ENCODE measurements at regions of chr20 and their contacts with region 1.

Region 1: GRCh38 chr20:38337561-38338140 is 8.6 kb upstream of the LBP start:
- DNase-seq: peak; percentile 79 to 98
- H3K4me3 ChIP-seq: no peak overlapping the region
- H3K27ac ChIP-seq: no peak overlapping the region
- H3K4me1 ChIP-seq: peaks cover 6 to 11% (median 10%) of the 10 kb centered on the region in 4 experiments
- H3K27me3 ChIP-seq: no peaks in the 10 kb centered on the region
- CTCF ChIP-seq: peak; percentile 99 to 100 (median 100)
- EP300 ChIP-seq: peak in 1 of 2 experiments; percentile 36; a peak in 1 of 3 replicates
- POLR2A ChIP-seq: no peak
- RAD21 ChIP-seq: peak; percentile 99 to 100

Region 2: GRCh38 chr20:38260378-38261053 is 77.1 kb before region 1 on chr20 and contains the start of gene KIAA1755:
- CTCF ChIA-PET with region 1: no interaction called
- POLR2A ChIA-PET with region 1: no interaction called
- DNase-seq: peak in 1 of 2 experiments; percentile 73
- H3K4me3 ChIP-seq: peak within 1 kb of the TSS; percentile 34 to 58 (median 44)
- H3K27ac ChIP-seq: no peak within 1 kb of the TSS
- H3K4me1 ChIP-seq: peaks cover 0 to 5% (median 2%) of the 10 kb centered on the region in 4 experiments; a peak in 4 of 7 replicates
- H3K27me3 ChIP-seq: peaks cover 3 to 18% (median 12%) of the 10 kb centered on the region in 4 experiments; a peak in 5 of 7 replicates
- CTCF ChIP-seq: no peak
- EP300 ChIP-seq: no peak
- POLR2A ChIP-seq: no peak
- RAD21 ChIP-seq: no peak
- total RNA-seq, gene KIAA1755: not detected in 2 replicates

Region 3: DNA sequence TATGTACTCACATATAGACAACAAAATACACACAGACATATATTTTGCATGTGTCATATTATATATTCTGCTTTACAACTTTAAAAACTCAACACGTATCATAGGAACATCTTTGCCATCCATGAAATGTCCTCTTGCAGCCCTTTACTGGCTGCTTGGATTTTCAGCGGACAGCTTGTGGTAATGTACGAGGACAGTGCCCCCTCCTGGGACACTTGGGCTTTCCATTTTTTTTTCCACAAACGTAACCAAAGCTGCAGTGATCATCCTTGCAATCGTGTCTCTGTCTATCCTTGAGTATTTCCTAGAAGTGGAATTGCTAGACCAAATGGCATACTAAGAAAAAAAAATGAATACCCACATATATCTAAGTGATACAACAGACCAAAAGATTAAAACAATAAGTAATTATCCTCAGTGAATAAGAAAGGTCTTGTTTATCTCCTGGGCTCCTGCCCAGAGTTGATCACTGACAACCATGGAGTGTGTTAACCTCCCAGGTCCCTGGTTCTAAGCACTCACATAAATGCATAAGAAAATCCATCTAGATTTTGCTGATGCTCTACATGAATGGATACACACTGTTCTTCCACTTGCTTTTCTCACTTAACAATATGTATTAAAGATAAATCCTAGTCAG is 15.6 kb before region 1 on chr20:
- CTCF ChIA-PET with region 1: interaction called, 25 read pairs
- POLR2A ChIA-PET with region 1: no interaction called
- DNase-seq: no peak
- H3K4me3 ChIP-seq: no peak overlapping the region
- H3K27ac ChIP-seq: no peak overlapping the region
- H3K4me1 ChIP-seq: no peaks in the 10 kb centered on the region
- H3K27me3 ChIP-seq: no peaks in the 10 kb centered on the region
- CTCF ChIP-seq: peak; percentile 45 to 66 (median 59)
- EP300 ChIP-seq: no peak
- POLR2A ChIP-seq: no peak
- RAD21 ChIP-seq: peak; percentile 61 to 70

Region 4: DNA sequence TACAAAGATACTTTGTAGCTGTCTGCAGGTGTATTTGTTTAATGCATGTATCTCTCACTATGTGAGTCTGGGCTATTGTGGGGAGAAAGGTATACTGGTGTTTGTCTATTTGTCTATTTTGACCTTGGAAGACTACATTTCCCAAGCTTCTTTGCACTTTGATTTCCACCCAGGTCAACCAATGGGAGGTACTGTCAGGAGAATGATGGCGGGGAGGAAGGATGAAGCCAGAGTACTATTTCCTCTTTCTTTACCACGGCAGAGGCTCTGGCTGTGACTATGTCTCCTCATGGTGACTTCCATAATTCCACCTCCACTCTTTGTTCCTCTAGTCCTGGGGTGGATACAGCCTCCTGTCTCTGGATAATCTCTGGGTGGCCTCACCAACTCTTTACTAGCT is 31.7 kb after region 1 on chr20:
- CTCF ChIA-PET with region 1: interaction called, 390 read pairs
- POLR2A ChIA-PET with region 1: interaction called, 4 read pairs
- DNase-seq: no peak
- H3K4me3 ChIP-seq: peak overlapping the region in 1 of 4 experiments; percentile 33; a peak in 1 of 8 replicates
- H3K27ac ChIP-seq: no peak overlapping the region
- H3K4me1 ChIP-seq: peaks cover 0 to 3% (median 0%) of the 10 kb centered on the region in 4 experiments; a peak in 1 of 7 replicates
- H3K27me3 ChIP-seq: no peaks in the 10 kb centered on the region; a peak in 1 of 7 replicates
- CTCF ChIP-seq: no peak
- EP300 ChIP-seq: no peak
- POLR2A ChIP-seq: no peak
- RAD21 ChIP-seq: no peak

Region 5: DNA sequence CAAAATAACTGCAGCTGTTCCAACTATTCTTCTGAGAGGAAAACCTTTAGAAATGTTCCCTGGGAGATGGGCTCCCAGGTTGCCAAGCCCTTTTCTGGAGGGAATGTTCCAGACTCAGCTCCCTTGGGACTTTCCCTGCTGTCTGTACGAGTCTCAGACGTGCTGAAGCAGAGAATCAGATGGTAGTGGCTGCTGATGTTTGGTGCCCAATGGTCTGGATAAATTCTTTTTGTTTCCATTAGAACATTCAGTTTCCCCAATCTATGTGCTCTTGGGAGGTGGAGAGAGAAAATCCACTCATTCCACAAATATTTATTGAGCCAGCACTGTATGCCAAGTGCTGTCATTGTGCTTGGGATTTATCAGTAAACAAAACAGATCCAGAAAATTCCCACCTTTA is 57.5 kb after region 1 on chr20:
- CTCF ChIA-PET with region 1: interaction called, 231 read pairs
- POLR2A ChIA-PET with region 1: no interaction called
- DNase-seq: no peak
- H3K4me3 ChIP-seq: no peak overlapping the region
- H3K27ac ChIP-seq: no peak overlapping the region
- H3K4me1 ChIP-seq: no peaks in the 10 kb centered on the region
- H3K27me3 ChIP-seq: no peaks in the 10 kb centered on the region
- CTCF ChIP-seq: no peak
- EP300 ChIP-seq: no peak
- POLR2A ChIP-seq: no peak
- RAD21 ChIP-seq: no peak

Region 6: DNA sequence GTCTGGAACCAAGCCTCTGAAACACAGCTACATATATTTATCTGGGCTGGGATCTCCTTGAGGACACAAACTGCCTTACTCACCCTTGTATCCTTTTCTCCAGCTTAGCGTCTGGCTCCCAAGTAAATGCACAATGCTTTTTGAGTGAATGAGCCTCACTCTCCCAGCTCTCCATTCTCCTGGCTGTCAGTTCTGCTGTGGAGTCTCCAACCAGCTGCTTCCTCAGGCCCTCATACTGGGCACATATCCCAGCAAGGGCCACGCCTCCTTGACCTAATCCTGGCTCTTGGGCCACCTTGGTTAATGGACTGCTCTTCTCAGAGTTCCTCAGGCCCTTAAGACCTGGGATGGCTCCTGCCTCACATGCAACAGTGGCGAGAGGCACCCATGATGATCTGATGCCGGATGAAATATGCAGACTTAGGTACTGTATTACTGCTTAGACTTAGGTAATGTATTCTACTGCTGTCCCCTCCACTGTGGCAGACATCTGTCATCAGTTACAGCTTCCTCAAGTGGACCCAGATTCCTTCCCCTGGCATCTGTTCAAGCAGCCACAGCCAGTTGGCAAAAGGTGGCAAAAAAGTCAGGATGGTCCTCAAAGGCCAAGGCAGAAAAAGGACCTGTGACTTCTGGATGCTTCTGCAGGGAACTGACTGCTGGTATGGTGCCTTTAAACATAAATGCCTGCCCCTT is 81.0 kb after region 1 on chr20:
- CTCF ChIA-PET with region 1: interaction called, 41 read pairs
- POLR2A ChIA-PET with region 1: interaction called, 6 read pairs
- DNase-seq: no peak
- H3K4me3 ChIP-seq: no peak overlapping the region
- H3K27ac ChIP-seq: no peak overlapping the region
- H3K4me1 ChIP-seq: peaks cover 0 to 5% (median under 1%) of the 10 kb centered on the region in 4 experiments; a peak in 4 of 7 replicates
- H3K27me3 ChIP-seq: no peaks in the 10 kb centered on the region
- CTCF ChIP-seq: no peak
- EP300 ChIP-seq: no peak
- POLR2A ChIP-seq: peak in 1 of 2 experiments; percentile 45; a peak in 1 of 3 replicates
- RAD21 ChIP-seq: no peak

Region 7: DNA sequence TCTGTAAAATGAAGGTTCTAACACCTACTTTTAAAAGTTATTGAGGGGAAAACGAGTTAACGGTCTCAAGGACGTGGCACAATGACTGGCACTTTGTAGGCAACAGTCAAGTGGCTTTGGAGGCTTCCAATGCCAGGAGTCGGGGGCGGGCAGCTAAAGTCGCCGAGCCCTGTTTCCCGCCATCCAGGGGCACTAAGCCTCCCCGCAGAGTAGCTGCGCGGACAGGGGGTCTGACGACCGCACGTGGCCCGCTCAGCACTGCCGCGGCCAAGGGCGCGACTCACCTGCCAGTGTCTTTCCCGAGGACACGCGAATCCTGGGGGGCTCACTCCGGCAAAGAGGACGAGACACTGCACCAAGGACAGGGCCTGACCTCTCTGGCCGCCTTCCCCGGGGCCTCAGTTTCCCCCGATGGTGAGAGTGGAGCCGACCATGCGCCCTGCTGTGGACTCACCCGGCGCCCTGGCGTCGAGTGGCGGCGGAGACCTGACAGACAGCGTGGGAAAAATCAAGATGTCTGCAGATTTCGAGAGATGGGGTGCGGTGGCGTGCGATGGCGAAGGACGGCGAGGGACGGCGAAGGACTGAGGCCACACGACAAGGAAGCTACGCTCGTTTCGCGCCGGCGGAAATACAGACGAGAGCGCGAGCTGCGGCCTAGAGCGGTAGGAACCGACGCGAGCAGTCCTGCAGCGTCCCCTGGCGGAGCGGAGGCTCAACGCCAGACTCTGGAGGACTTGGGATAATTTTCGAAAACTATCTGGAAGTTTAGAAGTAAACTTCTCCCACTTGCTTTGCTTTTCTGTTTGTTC is 97.3 kb after region 1 on chr20 and contains the start of gene SNHG17:
- CTCF ChIA-PET with region 1: interaction called, 7 read pairs
- POLR2A ChIA-PET with region 1: interaction called, 26 read pairs
- DNase-seq: peak; percentile 84 to 95
- H3K4me3 ChIP-seq: peak within 1 kb of the TSS; percentile 75 to 97 (median 94)
- H3K27ac ChIP-seq: peak within 1 kb of the TSS; percentile 89
- H3K4me1 ChIP-seq: peaks cover 0 to 17% (median 7%) of the 10 kb centered on the region in 4 experiments; a peak in 6 of 7 replicates
- H3K27me3 ChIP-seq: no peaks in the 10 kb centered on the region
- CTCF ChIP-seq: peak; percentile 98 to 100 (median 99)
- EP300 ChIP-seq: peak in 1 of 2 experiments; percentile 82; a peak in 1 of 3 replicates
- POLR2A ChIP-seq: peak; percentile 94 to 98
- RAD21 ChIP-seq: peak; percentile 24 to 42; a peak in 3 of 4 replicates
- total RNA-seq, gene SNHG17: 59.8 and 63.1 TPM in 2 replicates

Measured in H1 (cell line).